ENCODE measurements at regions of chr18 and their contacts with region 1.

Region 1: GRCh38 chr18:32018331-32019250 is at the start of gene RNF125:
- DNase-seq: peak; percentile 86 to 96 (median 90)
- ATAC-seq: peak; percentile 75 to 84 (median 82)
- H3K4me3 ChIP-seq: peak within 1 kb of the TSS; percentile 92 to 100
- H3K4me3 Mint-ChIP-seq: peak within 1 kb of the TSS; percentile 99 to 100 (median 99)
- H3K27ac ChIP-seq: peak within 1 kb of the TSS; percentile 84
- H3K27ac Mint-ChIP-seq: peak within 1 kb of the TSS; percentile 98 to 99
- H3K4me1 ChIP-seq: peaks cover 30 to 41% of the 10 kb centered on the region in 2 experiments
- H3K4me1 Mint-ChIP-seq: peaks cover 45 to 64% (median 49%) of the 10 kb centered on the region in 3 donors
- H3K27me3 ChIP-seq: no peaks in the 10 kb centered on the region
- H3K27me3 Mint-ChIP-seq: no peaks in the 10 kb centered on the region
- total RNA-seq, gene RNF125: 33.6 to 70.1 (median 37.4) TPM

Region 2: DNA sequence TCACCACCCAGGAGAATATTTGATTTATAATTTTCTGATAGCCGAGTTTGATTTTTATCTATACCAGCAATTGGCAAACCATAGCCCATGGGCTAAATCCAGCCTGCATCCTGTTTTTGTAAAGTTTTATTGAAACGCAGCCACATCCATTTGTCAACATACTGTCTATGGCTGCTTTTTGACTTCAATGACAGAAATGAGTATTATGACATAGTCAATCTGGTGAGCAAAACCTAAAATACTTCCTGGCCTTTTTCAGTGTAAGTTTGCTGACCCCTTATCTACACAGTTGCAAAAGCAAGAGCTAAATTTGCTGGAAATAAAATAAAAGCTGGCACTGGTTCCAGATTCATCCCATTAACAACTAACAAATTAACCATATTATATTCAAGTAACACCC is 178.1 kb before region 1 on chr18:
- CTCF ChIA-PET with region 1: no interaction called
- POLR2A ChIA-PET with region 1: interaction called in 1 of 2 experiments, 10 read pairs
- DNase-seq: no peak
- ATAC-seq: no peak
- H3K4me3 ChIP-seq: no peak overlapping the region
- H3K4me3 Mint-ChIP-seq: no peak overlapping the region
- H3K27ac ChIP-seq: no peak overlapping the region
- H3K27ac Mint-ChIP-seq: no peak overlapping the region
- H3K4me1 ChIP-seq: no peaks in the 10 kb centered on the region
- H3K4me1 Mint-ChIP-seq: no peaks in the 10 kb centered on the region
- H3K27me3 ChIP-seq: no peaks in the 10 kb centered on the region
- H3K27me3 Mint-ChIP-seq: no peaks in the 10 kb centered on the region

Region 3: DNA sequence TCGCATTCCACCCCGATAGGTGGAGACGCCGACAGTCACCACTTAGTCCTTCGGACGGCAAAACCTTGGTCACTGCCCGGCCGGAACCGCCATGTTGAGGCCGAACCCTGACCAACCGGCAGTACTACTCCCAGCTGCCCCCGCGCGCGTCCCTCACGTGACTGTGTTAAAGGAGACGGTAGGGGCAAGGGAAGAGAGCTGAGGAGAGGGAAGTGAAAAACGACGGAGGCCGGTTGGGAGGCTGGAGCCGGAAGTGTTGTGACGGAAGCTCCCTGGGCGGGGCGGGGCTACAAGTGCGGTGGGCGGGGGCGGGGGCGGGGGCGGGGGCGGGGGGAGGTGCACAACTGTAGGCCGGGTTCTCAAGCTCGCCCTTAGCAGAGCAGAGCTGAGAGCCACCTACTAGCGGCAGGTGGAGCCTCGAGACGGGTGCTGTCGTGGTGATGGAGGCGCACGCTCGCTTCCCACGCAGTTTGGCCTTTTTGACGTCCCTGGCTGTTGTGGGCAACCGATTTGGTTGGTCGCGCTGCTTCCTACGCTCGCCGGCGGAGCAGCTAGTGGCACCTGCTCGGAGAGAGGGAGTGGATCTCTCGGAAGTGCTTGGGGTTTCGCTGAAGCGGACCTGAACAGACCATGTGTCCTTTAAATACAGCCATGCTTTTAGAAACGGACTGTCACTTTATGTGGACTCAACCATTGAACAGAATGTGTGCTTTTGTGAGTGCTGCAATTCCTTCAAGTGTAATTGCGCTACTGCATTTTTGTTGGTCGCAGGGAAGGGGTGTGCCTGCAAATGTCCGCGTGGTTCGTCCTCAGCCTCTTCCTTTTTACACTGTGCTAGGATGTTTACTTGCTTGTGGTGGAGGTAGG is 75.4 kb before region 1 on chr18 and contains the start of gene TRAPPC8:
- CTCF ChIA-PET with region 1: interaction called, 5 to 38 read pairs
- POLR2A ChIA-PET with region 1: interaction called, 19 to 65 read pairs
- DNase-seq: peak; percentile 82 to 95 (median 90)
- ATAC-seq: peak; percentile 87 to 89 (median 88)
- H3K4me3 ChIP-seq: peak within 1 kb of the TSS; percentile 81 to 97
- H3K4me3 Mint-ChIP-seq: peak within 1 kb of the TSS; percentile 93 to 99 (median 98)
- H3K27ac ChIP-seq: peak within 1 kb of the TSS; percentile 92
- H3K27ac Mint-ChIP-seq: peak within 1 kb of the TSS; percentile 98 to 99
- H3K4me1 ChIP-seq: peaks cover 17 to 31% of the 10 kb centered on the region in 2 experiments
- H3K4me1 Mint-ChIP-seq: peaks cover 46 to 54% (median 52%) of the 10 kb centered on the region in 3 donors
- H3K27me3 ChIP-seq: no peaks in the 10 kb centered on the region
- H3K27me3 Mint-ChIP-seq: no peaks in the 10 kb centered on the region
- total RNA-seq, gene TRAPPC8: 44.7 to 62.0 (median 51.8) TPM

Region 4: GRCh38 chr18:32040936-32041335 is 22.3 kb after region 1 on chr18:
- CTCF ChIA-PET with region 1: interaction called, 3 to 12 read pairs
- POLR2A ChIA-PET with region 1: interaction called in 1 of 2 experiments, 22 read pairs
- DNase-seq: peak in 34 of 35 experiments; percentile 20 to 78 (median 46)
- ATAC-seq: peak; percentile 76 to 96 (median 91)
- H3K4me3 ChIP-seq: peak overlapping the region; percentile 4 to 38
- H3K4me3 Mint-ChIP-seq: peak overlapping the region; percentile 43 to 72 (median 52)
- H3K27ac ChIP-seq: peak overlapping the region; percentile 64
- H3K27ac Mint-ChIP-seq: peak overlapping the region; percentile 91 to 92
- H3K4me1 ChIP-seq: peaks cover 26 to 49% of the 10 kb centered on the region in 2 experiments
- H3K4me1 Mint-ChIP-seq: peaks cover 59 to 67% (median 64%) of the 10 kb centered on the region in 3 donors
- H3K27me3 ChIP-seq: no peaks in the 10 kb centered on the region
- H3K27me3 Mint-ChIP-seq: no peaks in the 10 kb centered on the region

Region 5: DNA sequence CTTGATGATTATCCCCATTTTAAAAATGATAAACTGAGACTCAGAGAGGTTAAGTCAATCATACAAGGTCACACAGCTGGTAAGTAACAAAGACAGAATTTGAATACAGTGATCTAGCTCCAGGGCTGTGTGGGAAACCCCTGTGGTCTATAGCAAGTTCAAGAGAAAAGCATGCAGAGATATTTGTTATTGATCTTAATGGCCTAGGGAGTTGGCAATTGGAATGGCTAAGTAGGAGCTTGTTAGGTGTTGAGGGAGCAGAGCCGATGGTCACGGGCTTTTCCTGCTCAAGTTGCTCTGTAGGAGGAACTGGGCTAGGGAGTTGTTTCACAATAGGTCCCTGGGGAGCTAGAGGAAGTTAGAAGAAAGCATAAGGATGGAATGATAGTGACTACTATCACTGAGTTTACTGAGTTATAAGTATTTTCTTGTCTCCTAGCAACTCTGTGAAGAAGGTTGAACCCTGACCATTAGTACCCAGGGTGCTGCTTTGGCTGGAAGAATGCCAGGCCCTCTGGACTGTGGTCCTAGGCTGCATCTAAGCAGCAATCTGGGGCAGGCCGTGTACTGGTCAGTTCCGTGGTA is 30.0 kb after region 1 on chr18:
- CTCF ChIA-PET with region 1: interaction called in 1 of 2 experiments, 15 read pairs
- POLR2A ChIA-PET with region 1: interaction called, 7 to 9 read pairs
- DNase-seq: peak in 1 of 35 experiments; percentile 35
- ATAC-seq: peak in 2 of 4 experiments; percentile 24 to 41
- H3K4me3 ChIP-seq: no peak overlapping the region
- H3K4me3 Mint-ChIP-seq: peak overlapping the region in 1 of 3 donors; percentile 49
- H3K27ac ChIP-seq: peak overlapping the region; percentile 56
- H3K27ac Mint-ChIP-seq: peak overlapping the region; percentile 80 to 91
- H3K4me1 ChIP-seq: peaks cover 20 to 36% of the 10 kb centered on the region in 2 experiments
- H3K4me1 Mint-ChIP-seq: peaks cover 27 to 48% (median 42%) of the 10 kb centered on the region in 3 donors
- H3K27me3 ChIP-seq: no peaks in the 10 kb centered on the region
- H3K27me3 Mint-ChIP-seq: no peaks in the 10 kb centered on the region

Region 6: DNA sequence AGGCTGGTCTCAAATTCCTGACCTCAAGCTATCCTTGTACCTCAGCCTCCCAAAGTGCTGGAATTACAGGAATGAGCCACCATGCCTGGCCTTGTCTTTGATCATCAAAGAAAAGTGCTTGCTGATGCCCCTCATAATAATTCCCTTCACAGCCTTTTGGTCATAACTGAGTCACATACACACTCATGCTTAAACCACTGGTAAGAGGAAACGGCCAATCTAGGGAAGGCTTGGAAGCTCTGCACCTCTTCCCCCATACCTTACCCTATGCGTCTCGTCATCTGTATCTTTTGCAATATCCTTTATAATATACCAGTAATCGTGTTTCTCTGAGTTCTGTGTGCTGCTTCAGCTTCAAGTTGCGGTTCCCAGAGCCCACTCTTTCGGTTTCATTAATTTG is 68.3 kb after region 1 on chr18:
- CTCF ChIA-PET with region 1: interaction called in 1 of 2 experiments, 12 read pairs
- POLR2A ChIA-PET with region 1: interaction called, 6 to 31 read pairs
- DNase-seq: no peak
- ATAC-seq: no peak
- H3K4me3 ChIP-seq: no peak overlapping the region
- H3K4me3 Mint-ChIP-seq: no peak overlapping the region
- H3K27ac ChIP-seq: no peak overlapping the region
- H3K27ac Mint-ChIP-seq: peak overlapping the region in 1 of 2 donors; percentile 13
- H3K4me1 ChIP-seq: peaks cover 22 to 35% of the 10 kb centered on the region in 2 experiments
- H3K4me1 Mint-ChIP-seq: peaks cover 40 to 50% (median 49%) of the 10 kb centered on the region in 3 donors
- H3K27me3 ChIP-seq: no peaks in the 10 kb centered on the region
- H3K27me3 Mint-ChIP-seq: peaks cover 0 to 1% of the 10 kb centered on the region in 2 donors

Region 7: DNA sequence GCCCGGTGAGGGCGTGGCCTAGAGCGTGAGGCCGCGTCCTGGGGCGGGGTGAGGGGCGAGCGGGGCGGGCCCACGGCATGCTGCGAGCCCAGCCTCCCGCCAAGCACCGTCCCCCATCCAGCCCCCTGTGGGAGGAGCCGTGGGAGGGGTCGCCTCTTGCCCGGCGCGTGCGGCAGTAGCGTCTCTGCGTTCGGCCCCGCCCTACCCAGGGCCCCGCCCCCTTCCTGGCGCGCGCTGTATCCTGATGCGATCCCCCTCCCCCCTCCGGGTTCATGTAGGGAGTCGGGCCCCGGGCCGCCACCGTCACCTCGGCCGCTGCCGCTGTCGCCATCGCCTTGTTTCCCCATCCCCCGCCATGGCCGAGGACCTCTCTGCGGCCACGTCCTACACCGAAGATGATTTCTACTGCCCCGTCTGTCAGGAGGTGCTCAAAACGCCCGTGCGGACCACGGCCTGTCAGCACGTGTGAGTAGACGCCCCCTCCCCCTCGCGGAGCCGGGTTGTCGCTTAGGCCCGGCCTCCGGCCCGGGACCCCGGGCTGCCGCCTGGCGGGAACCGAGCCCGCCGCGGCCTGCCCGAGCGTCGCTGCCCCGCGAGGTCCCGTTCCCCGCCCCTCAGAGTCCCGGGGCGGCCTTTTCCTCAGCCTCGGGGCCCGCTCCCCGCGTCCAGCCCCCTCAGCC is 74.0 kb after region 1 on chr18:
- CTCF ChIA-PET with region 1: interaction called in 1 of 2 experiments, 4 read pairs
- POLR2A ChIA-PET with region 1: interaction called, 6 to 31 read pairs
- DNase-seq: peak; percentile 96 to 100 (median 99)
- ATAC-seq: peak; percentile 86 to 94 (median 89)
- H3K4me3 ChIP-seq: peak overlapping the region; percentile 91 to 96
- H3K4me3 Mint-ChIP-seq: peak overlapping the region; percentile 95 to 97 (median 96)
- H3K27ac ChIP-seq: peak overlapping the region; percentile 98
- H3K27ac Mint-ChIP-seq: peak overlapping the region; percentile 97
- H3K4me1 ChIP-seq: peaks cover 39 to 46% of the 10 kb centered on the region in 2 experiments
- H3K4me1 Mint-ChIP-seq: peaks cover 45 to 50% (median 50%) of the 10 kb centered on the region in 3 donors
- H3K27me3 ChIP-seq: no peaks in the 10 kb centered on the region
- H3K27me3 Mint-ChIP-seq: no peaks in the 10 kb centered on the region

Measured in T-cell (primary cell).